Activated CD4-positive, alpha-beta T cell treated with anti-CD3 and anti-CD28 coated beads for 36 hours (primary cell): ENCODE measurements at regions of chr1 and their contacts with region 1.

Region 1: DNA sequence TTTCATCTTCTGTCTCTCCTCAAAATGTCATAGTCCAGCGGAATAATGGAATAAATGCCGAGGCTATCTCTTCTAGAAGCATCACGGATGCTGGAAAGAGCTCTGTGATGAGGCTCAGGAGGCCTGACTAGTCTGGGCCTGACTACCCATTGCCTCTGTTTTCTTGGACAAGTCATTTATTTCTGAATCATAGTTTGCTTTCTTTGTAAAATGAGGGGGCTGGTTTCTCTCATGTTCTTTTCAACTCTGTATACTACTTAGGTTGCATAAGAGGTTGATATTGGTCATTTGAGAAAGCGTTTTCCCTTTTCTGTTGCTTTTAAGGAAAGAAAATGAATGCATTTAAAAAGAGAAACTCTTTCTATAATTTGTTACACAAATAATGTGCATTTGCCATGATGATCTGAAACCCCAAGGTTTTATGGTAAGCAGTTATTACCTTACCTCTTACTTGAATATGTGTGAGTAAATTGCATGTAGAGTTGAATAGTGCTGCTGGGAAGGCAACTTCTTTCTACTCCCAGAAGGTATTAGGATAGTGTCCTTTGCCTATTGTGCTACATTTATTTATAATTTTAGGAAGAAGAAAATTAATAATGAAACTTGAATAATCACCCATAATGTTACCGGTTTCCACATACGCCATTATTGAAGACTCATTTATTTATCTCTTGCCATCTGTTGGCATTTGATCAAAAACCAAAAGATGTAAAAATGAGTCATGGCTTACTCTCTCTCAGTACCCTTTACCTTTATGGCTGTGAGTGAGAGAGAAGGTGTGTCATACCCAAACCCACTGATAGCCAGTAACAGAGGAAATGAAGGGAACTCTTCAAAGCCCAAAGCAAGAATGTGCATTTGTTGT is 179.1 kb downstream of the FASLG start:
- DNase-seq: peak; percentile 29
- ATAC-seq: peak; percentile 99
- H3K4me3 Mint-ChIP-seq: no peak overlapping the region
- H3K27ac Mint-ChIP-seq: no peak overlapping the region
- H3K4me1 Mint-ChIP-seq: peaks cover 25% of the 10 kb centered on the region
- H3K27me3 Mint-ChIP-seq: peaks cover 48% of the 10 kb centered on the region

Region 2: GRCh38 chr1:172588296-172589291 is 249.5 kb before region 1 on chr1:
- CTCF ChIA-PET with region 1: no interaction called
- POLR2A ChIA-PET with region 1: no interaction called
- intact Hi-C with region 1: loop called in 1 of 2 experiments (anchors 1 kb)
- DNase-seq: peak; percentile 48
- ATAC-seq: peak; percentile 95
- H3K4me3 Mint-ChIP-seq: no peak overlapping the region
- H3K27ac Mint-ChIP-seq: peak overlapping the region; percentile 28
- H3K4me1 Mint-ChIP-seq: peaks cover 25% of the 10 kb centered on the region
- H3K27me3 Mint-ChIP-seq: no peaks in the 10 kb centered on the region

Region 3: GRCh38 chr1:172778456-172779455 is 59.3 kb before region 1 on chr1:
- CTCF ChIA-PET with region 1: interaction called, 5 read pairs
- POLR2A ChIA-PET with region 1: no interaction called
- intact Hi-C with region 1: loop called in 1 of 2 experiments (anchors 1 kb)
- DNase-seq: no peak
- ATAC-seq: peak; percentile 86
- H3K4me3 Mint-ChIP-seq: no peak overlapping the region
- H3K27ac Mint-ChIP-seq: peak overlapping the region; percentile 33
- H3K4me1 Mint-ChIP-seq: peaks cover 17% of the 10 kb centered on the region
- H3K27me3 Mint-ChIP-seq: peaks cover 5% of the 10 kb centered on the region

Region 4: GRCh38 chr1:172813330-172813729 is 24.7 kb before region 1 on chr1:
- CTCF ChIA-PET with region 1: no interaction called
- POLR2A ChIA-PET with region 1: no interaction called
- intact Hi-C with region 1: no loop called
- DNase-seq: no peak
- ATAC-seq: no peak
- H3K4me3 Mint-ChIP-seq: no peak overlapping the region
- H3K27ac Mint-ChIP-seq: no peak overlapping the region
- H3K4me1 Mint-ChIP-seq: peaks cover 15% of the 10 kb centered on the region
- H3K27me3 Mint-ChIP-seq: peaks cover 8% of the 10 kb centered on the region

Region 5: DNA sequence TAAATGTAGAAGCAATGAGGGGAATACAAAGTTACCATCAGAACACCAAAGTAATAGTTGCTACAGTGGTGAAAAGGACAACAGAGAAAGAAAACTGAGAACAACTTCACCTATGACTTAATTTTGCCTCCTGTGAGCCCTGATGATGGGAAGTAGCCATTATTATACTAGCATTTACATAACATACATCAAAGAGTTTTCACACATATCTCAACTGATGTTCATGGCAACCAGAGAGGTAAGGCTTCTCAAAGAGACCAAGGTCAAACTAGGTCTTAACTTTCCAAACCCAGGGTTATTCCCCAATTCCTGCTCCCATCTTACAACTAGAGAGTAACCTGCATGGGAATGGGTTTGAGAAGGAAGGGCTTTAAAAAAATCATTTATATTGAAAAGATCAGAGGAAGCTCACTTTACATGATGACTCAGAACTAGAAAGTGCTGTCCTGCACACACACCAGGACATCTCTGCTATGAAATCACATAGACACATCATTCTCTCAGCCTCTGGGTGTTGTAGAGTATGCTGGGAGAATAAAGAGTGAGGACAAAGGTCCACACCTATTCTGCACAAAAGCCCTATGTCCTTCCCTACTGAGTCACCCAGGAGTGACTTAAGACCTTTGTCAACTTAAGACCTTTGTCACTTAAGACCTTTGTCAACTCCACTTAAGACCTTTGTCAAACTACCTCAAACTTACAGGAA is 33.0 kb after region 1 on chr1:
- CTCF ChIA-PET with region 1: interaction called, 4 read pairs
- POLR2A ChIA-PET with region 1: no interaction called
- intact Hi-C with region 1: loop called (anchors 1 kb)
- DNase-seq: peak; percentile 10
- ATAC-seq: peak; percentile 54
- H3K4me3 Mint-ChIP-seq: no peak overlapping the region
- H3K27ac Mint-ChIP-seq: no peak overlapping the region
- H3K4me1 Mint-ChIP-seq: peaks cover 33% of the 10 kb centered on the region
- H3K27me3 Mint-ChIP-seq: peaks cover 32% of the 10 kb centered on the region

Region 6: GRCh38 chr1:172895050-172895460 is 57.0 kb after region 1 on chr1:
- CTCF ChIA-PET with region 1: interaction called, 5 read pairs
- POLR2A ChIA-PET with region 1: no interaction called
- intact Hi-C with region 1: loop called (anchors 1 kb)
- DNase-seq: peak; percentile 35
- ATAC-seq: peak; percentile 84
- H3K4me3 Mint-ChIP-seq: peak overlapping the region; percentile 20
- H3K27ac Mint-ChIP-seq: peak overlapping the region; percentile 32
- H3K4me1 Mint-ChIP-seq: peaks cover 42% of the 10 kb centered on the region
- H3K27me3 Mint-ChIP-seq: peaks cover 29% of the 10 kb centered on the region

Region 7: GRCh38 chr1:173038875-173039554 is 201.0 kb after region 1 on chr1:
- CTCF ChIA-PET with region 1: no interaction called
- POLR2A ChIA-PET with region 1: no interaction called
- intact Hi-C with region 1: loop called in 1 of 2 experiments (anchors 1 kb)
- DNase-seq: peak; percentile 37
- ATAC-seq: peak; percentile 89
- H3K4me3 Mint-ChIP-seq: no peak overlapping the region
- H3K27ac Mint-ChIP-seq: no peak overlapping the region
- H3K4me1 Mint-ChIP-seq: peaks cover 13% of the 10 kb centered on the region
- H3K27me3 Mint-ChIP-seq: peaks cover 2% of the 10 kb centered on the region

Region 8: GRCh38 chr1:173297798-173298391 is 459.8 kb after region 1 on chr1:
- CTCF ChIA-PET with region 1: no interaction called
- POLR2A ChIA-PET with region 1: no interaction called
- intact Hi-C with region 1: loop called (anchors 5 kb)
- DNase-seq: peak; percentile 67
- ATAC-seq: peak; percentile 94
- H3K4me3 Mint-ChIP-seq: no peak overlapping the region
- H3K27ac Mint-ChIP-seq: no peak overlapping the region
- H3K4me1 Mint-ChIP-seq: peaks cover 27% of the 10 kb centered on the region
- H3K27me3 Mint-ChIP-seq: peaks cover 6% of the 10 kb centered on the region